A549 (cell line): ENCODE measurements at regions of chr15 and their contacts with region 1.

Region 1: GRCh38 chr15:85840065-85840801 is 45.5 kb upstream of the KLHL25 start:
- DNase-seq: peak; percentile 90 to 91
- ATAC-seq: peak; percentile 90 to 94
- H3K4me3 ChIP-seq: peak overlapping the region; percentile 33
- H3K27ac ChIP-seq: peak overlapping the region; percentile 51 to 59; a peak in 5 of 6 replicates
- H3K4me1 ChIP-seq: peaks cover 26% of the 10 kb centered on the region
- CTCF ChIP-seq: peak; percentile 99
- EP300 ChIP-seq: no peak
- POLR2A ChIP-seq: no peak
- RAD21 ChIP-seq: peak; percentile 78 to 96

Region 2: GRCh38 chr15:85730001-85730820 is 110.0 kb before region 1 on chr15:
- CTCF ChIA-PET with region 1: interaction called, 67 read pairs
- POLR2A ChIA-PET with region 1: interaction called, 4 read pairs
- DNase-seq: peak; percentile 73 to 74
- ATAC-seq: peak; percentile 83 to 91
- H3K4me3 ChIP-seq: no peak overlapping the region
- H3K27ac ChIP-seq: no peak overlapping the region
- H3K4me1 ChIP-seq: no peaks in the 10 kb centered on the region
- CTCF ChIP-seq: peak; percentile 91
- EP300 ChIP-seq: no peak
- POLR2A ChIP-seq: no peak
- RAD21 ChIP-seq: peak; percentile 82 to 83

Region 3: GRCh38 chr15:85742186-85742821 is 97.9 kb before region 1 on chr15:
- CTCF ChIA-PET with region 1: interaction called, 33 read pairs
- POLR2A ChIA-PET with region 1: no interaction called
- DNase-seq: no peak
- ATAC-seq: no peak
- H3K4me3 ChIP-seq: no peak overlapping the region
- H3K27ac ChIP-seq: no peak overlapping the region
- H3K4me1 ChIP-seq: no peaks in the 10 kb centered on the region
- CTCF ChIP-seq: no peak
- EP300 ChIP-seq: no peak
- POLR2A ChIP-seq: no peak
- RAD21 ChIP-seq: no peak

Region 4: GRCh38 chr15:85760531-85761371 is 79.5 kb before region 1 on chr15:
- CTCF ChIA-PET with region 1: interaction called, 27 read pairs
- POLR2A ChIA-PET with region 1: no interaction called
- DNase-seq: peak in 1 of 2 experiments; percentile 41
- ATAC-seq: peak in 1 of 2 experiments; percentile 60; a peak in 3 of 6 replicates
- H3K4me3 ChIP-seq: no peak overlapping the region
- H3K27ac ChIP-seq: no peak overlapping the region
- H3K4me1 ChIP-seq: no peaks in the 10 kb centered on the region
- CTCF ChIP-seq: peak; percentile 51
- EP300 ChIP-seq: no peak
- POLR2A ChIP-seq: no peak
- RAD21 ChIP-seq: peak; percentile 62 to 65

Region 5: DNA sequence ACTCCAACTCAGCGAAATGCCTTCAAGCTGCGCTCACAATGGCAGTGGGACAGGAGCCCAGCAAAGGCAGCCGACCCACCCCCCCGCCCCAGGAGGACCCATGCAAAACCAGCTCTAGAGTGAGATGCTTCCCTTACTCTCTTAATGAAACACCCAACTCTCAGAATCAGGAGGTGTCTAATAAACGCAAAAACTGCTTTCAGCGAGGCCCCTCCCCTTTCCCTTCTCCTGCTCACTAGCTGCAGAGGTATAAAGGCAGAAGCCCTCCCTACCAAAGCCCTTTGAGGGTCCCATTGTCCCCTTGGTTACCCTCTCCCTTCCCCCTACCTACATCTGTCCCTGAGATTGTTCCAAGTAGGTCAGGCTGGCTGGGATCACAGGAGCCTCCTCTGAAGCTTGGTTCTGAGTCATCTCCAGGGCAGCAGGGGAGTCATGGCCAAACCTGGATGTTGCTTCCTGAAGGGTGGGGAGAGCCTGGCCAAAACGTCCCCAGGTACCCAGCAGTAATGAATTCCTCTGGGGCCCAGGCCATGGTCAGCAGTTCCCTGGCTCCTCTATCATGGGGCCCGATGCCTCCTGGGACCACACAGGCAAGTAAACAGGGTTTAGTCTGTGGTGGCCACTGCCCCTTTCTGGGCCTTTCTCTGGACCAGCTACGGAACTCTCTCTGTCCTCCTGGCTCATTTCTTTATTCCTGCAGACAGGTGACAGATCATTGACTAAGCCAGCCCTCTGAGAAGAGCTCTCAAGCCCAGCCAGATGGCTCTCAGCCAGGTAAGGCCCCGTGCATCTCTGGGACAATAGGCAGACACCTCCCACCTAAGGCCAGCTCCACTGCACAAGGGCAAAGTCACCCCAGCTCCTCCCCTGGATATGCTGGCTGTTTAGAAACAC is 54.1 kb before region 1 on chr15:
- CTCF ChIA-PET with region 1: interaction called, 26 read pairs
- POLR2A ChIA-PET with region 1: no interaction called
- DNase-seq: peak; percentile 31 to 83
- ATAC-seq: peak; percentile 85 to 88
- H3K4me3 ChIP-seq: no peak overlapping the region
- H3K27ac ChIP-seq: peak overlapping the region; percentile 41 to 76; a peak in 5 of 6 replicates
- H3K4me1 ChIP-seq: peaks cover 19% of the 10 kb centered on the region
- CTCF ChIP-seq: no peak
- EP300 ChIP-seq: no peak
- POLR2A ChIP-seq: no peak
- RAD21 ChIP-seq: no peak

Region 6: DNA sequence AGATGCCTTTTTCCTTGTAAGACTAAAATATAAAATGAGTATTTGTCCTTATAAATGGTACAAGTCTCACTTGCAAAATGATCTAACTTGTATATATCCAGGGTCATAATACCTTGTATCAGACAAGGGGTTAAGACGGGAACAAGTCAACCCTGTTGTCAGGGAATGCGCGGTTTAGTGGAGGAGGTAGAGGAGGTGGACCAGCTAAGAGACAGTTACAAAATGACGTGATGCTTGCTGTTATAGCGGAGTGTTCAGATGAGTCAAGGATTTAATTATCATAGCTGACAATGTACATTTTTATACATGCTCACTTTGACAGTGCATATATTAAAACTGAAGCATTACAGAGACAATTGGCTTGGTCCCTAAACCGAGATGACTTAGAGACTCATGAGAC is 18.7 kb before region 1 on chr15:
- CTCF ChIA-PET with region 1: interaction called, 63 read pairs
- POLR2A ChIA-PET with region 1: no interaction called
- DNase-seq: no peak
- ATAC-seq: no peak
- H3K4me3 ChIP-seq: no peak overlapping the region
- H3K27ac ChIP-seq: no peak overlapping the region
- H3K4me1 ChIP-seq: no peaks in the 10 kb centered on the region
- CTCF ChIP-seq: no peak
- EP300 ChIP-seq: no peak
- POLR2A ChIP-seq: no peak
- RAD21 ChIP-seq: no peak

Region 7: GRCh38 chr15:85871545-85871944 is 31.3 kb after region 1 on chr15:
- CTCF ChIA-PET with region 1: no interaction called
- POLR2A ChIA-PET with region 1: no interaction called
- DNase-seq: no peak
- ATAC-seq: no peak
- H3K4me3 ChIP-seq: no peak overlapping the region
- H3K27ac ChIP-seq: no peak overlapping the region
- H3K4me1 ChIP-seq: no peaks in the 10 kb centered on the region
- CTCF ChIP-seq: no peak
- EP300 ChIP-seq: no peak
- POLR2A ChIP-seq: no peak
- RAD21 ChIP-seq: no peak